ENCODE measurements at regions of chr14 and their contacts with region 1.

Region 1: DNA sequence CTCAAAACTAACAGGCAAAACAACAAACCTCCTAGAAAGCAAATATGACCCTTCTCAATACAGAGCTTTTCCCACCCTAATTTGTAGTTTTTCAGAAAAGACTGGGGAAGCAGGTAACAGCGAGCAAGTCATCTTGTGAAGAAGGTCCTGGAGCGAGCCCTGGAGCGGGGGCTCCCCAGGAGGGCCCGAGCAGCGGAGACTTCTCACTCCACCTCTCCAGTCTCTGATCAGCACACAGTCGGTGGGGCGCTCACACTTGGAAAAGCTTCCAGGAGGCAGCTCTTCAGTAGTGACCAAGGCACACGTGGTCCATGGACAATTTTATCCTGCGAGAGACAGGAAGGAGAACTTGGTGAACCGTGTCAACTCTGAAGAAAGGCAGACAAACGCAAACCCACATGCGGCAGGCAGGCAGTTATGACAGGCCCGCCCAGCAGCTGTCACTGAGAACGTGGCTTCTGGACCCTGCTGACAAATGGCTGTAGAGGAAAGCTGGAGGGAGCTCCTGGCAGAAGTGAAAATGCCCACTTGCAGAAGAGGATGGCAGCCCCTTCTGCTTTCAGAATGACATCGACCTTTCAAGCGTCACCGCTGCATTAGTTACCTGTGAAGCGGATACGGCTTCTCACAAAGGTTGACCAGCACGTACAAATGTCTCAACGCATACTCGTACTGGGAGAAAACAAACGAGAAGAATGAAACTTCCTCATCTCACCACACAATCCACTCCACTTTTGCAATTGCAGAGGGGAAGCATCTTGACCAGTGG is 44.2 kb downstream of the LGMN start:
- DNase-seq: no peak

Region 2: DNA sequence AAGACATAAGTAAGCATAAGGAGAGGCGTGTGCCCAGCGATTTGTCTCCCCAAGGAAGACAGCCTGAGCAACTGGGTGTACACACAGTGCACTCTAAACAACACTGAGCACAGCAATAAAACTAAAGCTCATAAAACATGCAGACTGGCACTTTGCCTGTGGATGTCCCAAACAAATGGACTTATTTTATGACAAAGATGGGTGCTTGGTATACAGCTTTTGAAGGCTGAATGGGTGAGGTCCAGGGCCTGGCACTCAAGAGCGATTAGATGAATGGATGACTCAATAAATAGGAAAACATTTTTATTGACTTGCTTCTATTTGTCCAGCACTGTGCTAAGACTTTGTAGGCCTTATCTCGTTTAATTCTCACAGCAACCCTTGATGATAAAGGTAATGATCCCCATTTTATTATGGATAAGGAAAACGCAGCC is 15.7 kb after region 1 on chr14:
- intact Hi-C with region 1: loop called in 1 of 2 experiments (anchors 1 kb)
- DNase-seq: peak; percentile 56

Measured in posterior vena cava (tissue), 2 donors.